ENCODE measurements at regions of chr1 and their contacts with region 1.

Region 1: GRCh38 chr1:3428899-3429298 is 25.6 kb upstream of the ARHGEF16 start:
- DNase-seq: no peak
- H3K4me3 ChIP-seq: no peak overlapping the region
- H3K27ac ChIP-seq: no peak overlapping the region
- H3K4me1 ChIP-seq: peaks cover 10 to 11% (median 10%) of the 10 kb centered on the region in 4 donors
- H3K27me3 ChIP-seq: peaks cover 0 to 19% (median 0%) of the 10 kb centered on the region in 3 donors
- CTCF ChIP-seq: no peak
- EP300 ChIP-seq: no peak
- POLR2A ChIP-seq: no peak

Region 2: GRCh38 chr1:3012456-3013291 is 416.2 kb before region 1 on chr1:
- intact Hi-C with region 1: loop called (anchors 5 kb)
- DNase-seq: peak; percentile 77 to 78
- H3K4me3 ChIP-seq: peak overlapping the region in 2 of 4 donors; percentile 6 to 13
- H3K27ac ChIP-seq: no peak overlapping the region
- H3K4me1 ChIP-seq: peaks cover 0 to 17% (median 13%) of the 10 kb centered on the region in 4 donors
- H3K27me3 ChIP-seq: peaks cover 4 to 70% (median 11%) of the 10 kb centered on the region in 3 donors
- CTCF ChIP-seq: peak in 5 of 7 experiments; percentile 33 to 98 (median 95)
- EP300 ChIP-seq: no peak
- POLR2A ChIP-seq: no peak